Activated CD8-positive, alpha-beta T cell treated with anti-CD3 and anti-CD28 coated beads for 36 hours (primary cell): ENCODE measurements at regions of chr13 and their contacts with region 1.

Region 1: DNA sequence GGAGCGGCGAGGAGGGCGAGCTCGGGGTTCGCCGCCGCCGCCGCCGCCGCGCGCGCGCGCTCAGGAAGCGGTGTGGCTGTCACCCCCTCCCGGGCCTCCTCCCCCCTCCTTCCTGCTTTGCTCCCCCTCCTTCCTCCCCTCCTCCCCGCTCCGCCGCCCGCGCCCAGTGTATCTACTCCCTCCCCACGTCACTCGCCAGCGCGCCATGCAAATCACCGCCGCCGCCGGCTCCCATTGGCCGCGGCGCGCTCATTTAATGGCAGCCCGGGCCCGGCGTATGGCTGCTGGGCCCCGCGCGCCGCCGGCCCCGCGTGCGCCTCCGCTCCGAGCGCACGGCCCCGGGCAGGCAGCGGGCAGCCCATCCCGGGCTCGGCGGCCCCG is 335 bp upstream of the SOX1 start:
- DNase-seq: peak; percentile 77
- ATAC-seq: peak; percentile 81
- H3K4me3 Mint-ChIP-seq: peak overlapping the region; percentile 45
- H3K27ac Mint-ChIP-seq: no peak overlapping the region
- H3K4me1 Mint-ChIP-seq: peaks cover 7% of the 10 kb centered on the region
- H3K27me3 Mint-ChIP-seq: peaks cover 67% of the 10 kb centered on the region
- CTCF ChIP-seq: no peak

Region 2: GRCh38 chr13:112102243-112102642 is 35.6 kb after region 1 on chr13:
- CTCF ChIA-PET with region 1: no interaction called
- POLR2A ChIA-PET with region 1: no interaction called
- intact Hi-C with region 1: loop called (anchors 5 kb)
- DNase-seq: no peak
- ATAC-seq: no peak
- H3K4me3 Mint-ChIP-seq: no peak overlapping the region
- H3K27ac Mint-ChIP-seq: no peak overlapping the region
- H3K4me1 Mint-ChIP-seq: peaks cover 2% of the 10 kb centered on the region
- H3K27me3 Mint-ChIP-seq: peaks cover 42% of the 10 kb centered on the region
- CTCF ChIP-seq: no peak